Endothelial cell of umbilical vein (primary cell): ENCODE measurements at regions of chr15 and their contacts with region 1.

Region 1: DNA sequence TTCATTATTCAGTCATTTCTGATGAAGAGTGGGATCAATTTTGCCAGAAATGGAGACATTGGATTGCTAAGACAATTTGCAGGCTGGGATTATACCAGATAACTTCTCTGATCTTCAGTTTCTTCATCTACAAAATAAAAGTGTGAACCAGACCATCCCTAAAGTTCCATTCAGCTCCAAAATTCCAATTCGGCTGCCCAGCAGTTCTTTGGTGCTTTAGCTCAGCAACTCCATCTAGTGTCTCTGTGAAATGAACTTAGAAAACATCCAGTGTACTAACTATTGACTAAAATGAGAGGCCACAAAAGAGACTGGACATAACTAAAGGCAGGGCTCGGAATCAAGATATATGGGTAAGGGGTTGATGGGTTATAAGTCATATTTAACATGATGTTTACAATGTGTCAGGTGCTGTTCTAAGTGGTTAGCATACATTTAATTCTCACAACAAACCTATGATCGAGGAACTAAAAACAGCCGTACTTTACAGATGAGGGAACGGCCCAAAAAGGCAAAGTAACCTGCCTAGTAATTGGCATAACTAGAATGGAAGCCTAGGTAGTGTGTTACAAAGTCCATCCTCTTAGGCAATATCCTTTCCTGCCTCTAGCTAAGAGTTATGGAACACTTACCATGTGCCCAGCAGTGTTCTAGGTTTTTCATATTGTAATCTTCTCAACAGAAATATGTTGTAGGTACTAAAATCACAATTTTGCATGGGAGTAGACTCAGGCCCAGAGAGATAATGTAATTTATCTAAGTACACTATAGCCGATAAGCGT is 17.0 kb downstream of the THAP10 start:
- DNase-seq: peak; percentile 48
- H3K4me3 ChIP-seq: no peak overlapping the region
- H3K27ac ChIP-seq: no peak overlapping the region
- H3K4me1 ChIP-seq: peaks cover 8% of the 10 kb centered on the region
- H3K27me3 ChIP-seq: no peaks in the 10 kb centered on the region
- CTCF ChIP-seq: peak; percentile 23 to 45
- POLR2A ChIP-seq: no peak

Region 2: GRCh38 chr15:70679919-70680231 is 195.3 kb before region 1 on chr15:
- CTCF ChIA-PET with region 1: interaction called, 32 read pairs
- POLR2A ChIA-PET with region 1: no interaction called
- dilution Hi-C with region 1: no loop called
- intact Hi-C with region 1: loop called (anchors 1 kb)
- DNase-seq: no peak
- H3K4me3 ChIP-seq: no peak overlapping the region
- H3K27ac ChIP-seq: no peak overlapping the region
- H3K4me1 ChIP-seq: peaks cover 12% of the 10 kb centered on the region
- H3K27me3 ChIP-seq: no peaks in the 10 kb centered on the region
- CTCF ChIP-seq: no peak
- POLR2A ChIP-seq: no peak

Region 3: GRCh38 chr15:70833897-70834765 is 41.1 kb before region 1 on chr15:
- CTCF ChIA-PET with region 1: interaction called, 36 read pairs
- POLR2A ChIA-PET with region 1: no interaction called
- dilution Hi-C with region 1: no loop called
- intact Hi-C with region 1: no loop called
- DNase-seq: peak; percentile 76
- H3K4me3 ChIP-seq: no peak overlapping the region
- H3K27ac ChIP-seq: no peak overlapping the region
- H3K4me1 ChIP-seq: peaks cover 14% of the 10 kb centered on the region
- H3K27me3 ChIP-seq: no peaks in the 10 kb centered on the region
- CTCF ChIP-seq: no peak
- POLR2A ChIP-seq: no peak

Region 4: DNA sequence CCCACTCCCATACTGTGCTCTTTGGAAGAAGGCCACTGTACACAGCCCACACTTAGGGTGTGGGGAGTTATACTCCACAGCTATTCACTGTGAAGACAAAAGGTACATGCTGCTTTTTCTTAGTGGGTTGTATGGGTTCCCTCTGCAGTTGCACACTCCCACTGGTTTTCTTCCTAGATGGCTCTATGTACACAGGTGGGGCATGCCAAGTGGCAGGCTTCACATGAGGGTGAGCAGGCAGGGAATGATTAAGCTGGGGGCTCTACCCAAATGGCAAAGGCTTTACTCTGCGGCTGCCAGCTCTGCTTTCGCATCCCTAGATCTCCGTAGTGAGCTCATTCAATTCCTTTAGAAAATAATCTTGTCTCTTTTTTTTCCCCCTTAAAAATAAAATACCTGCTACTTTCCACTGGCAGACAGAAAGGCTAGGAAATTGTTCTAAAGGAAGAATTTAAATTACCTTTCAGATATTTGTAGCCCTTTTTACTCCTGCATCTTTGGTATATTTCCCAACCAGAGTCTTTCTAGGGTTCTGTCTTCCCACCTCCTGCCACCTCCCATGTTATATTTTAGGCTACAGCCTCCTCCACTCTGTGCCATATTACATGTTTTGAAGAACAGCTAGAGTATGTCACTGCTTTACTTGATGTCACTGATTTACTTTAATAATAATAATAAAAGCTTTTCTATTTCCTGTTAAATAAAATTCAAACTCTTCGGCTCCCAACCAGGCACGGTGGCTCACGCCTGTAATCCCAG is 29.4 kb before region 1 on chr15:
- CTCF ChIA-PET with region 1: interaction called, 10 read pairs
- POLR2A ChIA-PET with region 1: no interaction called
- dilution Hi-C with region 1: no loop called
- intact Hi-C with region 1: no loop called
- DNase-seq: no peak
- H3K4me3 ChIP-seq: no peak overlapping the region
- H3K27ac ChIP-seq: no peak overlapping the region
- H3K4me1 ChIP-seq: no peaks in the 10 kb centered on the region
- H3K27me3 ChIP-seq: no peaks in the 10 kb centered on the region
- CTCF ChIP-seq: no peak
- POLR2A ChIP-seq: no peak

Region 5: GRCh38 chr15:70853821-70854666 is 21.1 kb before region 1 on chr15 and contains the start of gene LARP6:
- CTCF ChIA-PET with region 1: interaction called, 72 read pairs
- POLR2A ChIA-PET with region 1: interaction called, 3 read pairs
- dilution Hi-C with region 1: no loop called
- intact Hi-C with region 1: no loop called
- DNase-seq: peak; percentile 60
- H3K4me3 ChIP-seq: peak within 1 kb of the TSS; percentile 61 to 76 (median 66)
- H3K27ac ChIP-seq: peak within 1 kb of the TSS; percentile 60
- H3K4me1 ChIP-seq: peaks cover 26% of the 10 kb centered on the region
- H3K27me3 ChIP-seq: no peaks in the 10 kb centered on the region
- CTCF ChIP-seq: no peak
- POLR2A ChIP-seq: peak; percentile 55
- total RNA-seq, gene LARP6: 16.9 and 25.2 TPM in 2 replicates

Region 6: GRCh38 chr15:71465131-71465530 is 589.9 kb after region 1 on chr15:
- CTCF ChIA-PET with region 1: no interaction called
- POLR2A ChIA-PET with region 1: no interaction called
- dilution Hi-C with region 1: no loop called
- intact Hi-C with region 1: no loop called
- DNase-seq: peak; percentile 60
- H3K4me3 ChIP-seq: no peak overlapping the region
- H3K27ac ChIP-seq: no peak overlapping the region
- H3K4me1 ChIP-seq: peaks cover 4% of the 10 kb centered on the region
- H3K27me3 ChIP-seq: no peaks in the 10 kb centered on the region
- CTCF ChIP-seq: no peak
- POLR2A ChIP-seq: no peak